Aorta (tissue), 5 donors: ENCODE measurements at regions of chr11 and their contacts with region 1.

Region 1: GRCh38 chr11:57456960-57457642 is 3.2 kb upstream of the RTN4RL2 start:
- DNase-seq: peak; percentile 92 to 96
- ATAC-seq: peak; percentile 93
- H3K4me3 ChIP-seq: no peak overlapping the region
- H3K27ac ChIP-seq: no peak overlapping the region
- H3K4me1 ChIP-seq: no peaks in the 10 kb centered on the region
- H3K27me3 ChIP-seq: no peaks in the 10 kb centered on the region

Region 2: GRCh38 chr11:57410287-57410686 is 46.8 kb before region 1 on chr11:
- intact Hi-C with region 1: no loop called
- DNase-seq: no peak
- ATAC-seq: no peak
- H3K4me3 ChIP-seq: no peak overlapping the region
- H3K27ac ChIP-seq: no peak overlapping the region
- H3K4me1 ChIP-seq: no peaks in the 10 kb centered on the region
- H3K27me3 ChIP-seq: no peaks in the 10 kb centered on the region

Region 3: GRCh38 chr11:57434640-57435546 is 22.2 kb before region 1 on chr11:
- intact Hi-C with region 1: loop called in 1 of 2 experiments (anchors 1 kb)
- DNase-seq: no peak
- ATAC-seq: peak; percentile 83
- H3K4me3 ChIP-seq: no peak overlapping the region
- H3K27ac ChIP-seq: no peak overlapping the region
- H3K4me1 ChIP-seq: no peaks in the 10 kb centered on the region
- H3K27me3 ChIP-seq: no peaks in the 10 kb centered on the region

Region 4: DNA sequence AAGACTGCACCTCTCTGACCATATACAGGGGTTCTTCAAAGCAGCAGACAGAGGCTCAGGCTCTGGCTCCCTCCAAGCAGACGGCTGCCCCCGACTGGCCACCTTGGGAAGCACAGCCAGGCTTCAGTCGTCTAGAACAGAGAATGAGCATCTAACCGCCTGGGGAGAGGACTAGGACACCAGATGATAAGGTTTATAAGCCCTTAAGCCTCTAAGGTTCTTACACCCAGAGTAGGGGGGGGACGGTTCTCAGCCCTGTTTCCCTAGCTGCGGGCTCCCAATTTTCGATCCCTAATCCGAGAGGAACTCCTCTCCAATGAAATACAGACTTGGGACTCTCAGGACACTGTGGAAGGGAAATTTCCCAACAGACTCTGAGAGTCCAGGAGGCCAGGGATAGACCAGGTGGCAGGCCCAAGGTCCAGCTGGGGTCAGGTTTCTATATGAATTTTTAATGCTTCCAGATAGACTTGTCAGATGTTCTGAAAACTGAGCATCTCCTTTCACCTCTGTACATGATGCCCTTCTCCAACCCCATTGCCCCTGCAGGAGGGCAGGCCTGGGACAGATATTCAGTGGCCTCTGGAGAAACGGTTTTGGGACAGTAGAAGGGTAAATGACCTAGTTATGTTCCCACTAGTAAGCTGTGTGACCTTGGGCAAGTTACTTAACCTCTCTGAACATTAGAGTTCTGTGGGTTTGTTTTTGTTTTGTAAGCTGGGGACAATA is 23.5 kb after region 1 on chr11:
- intact Hi-C with region 1: loop called in 1 of 2 experiments (anchors 2 kb)
- DNase-seq: peak; percentile 78 to 91
- ATAC-seq: peak; percentile 68
- H3K4me3 ChIP-seq: no peak overlapping the region
- H3K27ac ChIP-seq: no peak overlapping the region
- H3K4me1 ChIP-seq: no peaks in the 10 kb centered on the region
- H3K27me3 ChIP-seq: no peaks in the 10 kb centered on the region

Region 5: GRCh38 chr11:57597916-57598830 is 141.1 kb after region 1 on chr11:
- intact Hi-C with region 1: no loop called
- DNase-seq: peak; percentile 89 to 91
- ATAC-seq: peak; percentile 96
- H3K4me3 ChIP-seq: peak overlapping the region; percentile 55 to 83
- H3K27ac ChIP-seq: peak overlapping the region; percentile 49 to 99
- H3K4me1 ChIP-seq: peaks cover 0 to 4% of the 10 kb centered on the region in 2 donors
- H3K27me3 ChIP-seq: no peaks in the 10 kb centered on the region

Region 6: DNA sequence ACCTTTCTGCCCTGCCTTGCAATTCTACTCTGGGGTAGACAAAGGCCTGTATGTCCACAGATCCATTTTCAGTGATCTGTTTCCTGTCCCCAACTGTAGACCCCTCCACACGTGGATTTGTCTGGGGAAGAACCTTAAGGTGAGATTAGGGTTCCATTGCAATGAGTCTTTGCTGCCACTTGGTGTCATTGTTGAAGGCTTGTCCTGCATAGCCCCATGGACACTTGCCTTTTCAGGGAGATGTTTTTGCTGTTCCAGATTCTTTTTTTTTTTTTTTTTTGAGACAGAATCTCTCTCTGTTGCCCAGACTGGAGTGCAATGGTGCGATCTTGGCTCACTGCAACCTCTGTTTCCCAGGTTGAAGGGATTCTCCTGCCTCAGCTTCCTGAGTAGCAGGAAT is 162.2 kb after region 1 on chr11:
- intact Hi-C with region 1: no loop called
- DNase-seq: no peak
- ATAC-seq: no peak
- H3K4me3 ChIP-seq: no peak overlapping the region
- H3K27ac ChIP-seq: no peak overlapping the region
- H3K4me1 ChIP-seq: no peaks in the 10 kb centered on the region
- H3K27me3 ChIP-seq: no peaks in the 10 kb centered on the region

Region 7: DNA sequence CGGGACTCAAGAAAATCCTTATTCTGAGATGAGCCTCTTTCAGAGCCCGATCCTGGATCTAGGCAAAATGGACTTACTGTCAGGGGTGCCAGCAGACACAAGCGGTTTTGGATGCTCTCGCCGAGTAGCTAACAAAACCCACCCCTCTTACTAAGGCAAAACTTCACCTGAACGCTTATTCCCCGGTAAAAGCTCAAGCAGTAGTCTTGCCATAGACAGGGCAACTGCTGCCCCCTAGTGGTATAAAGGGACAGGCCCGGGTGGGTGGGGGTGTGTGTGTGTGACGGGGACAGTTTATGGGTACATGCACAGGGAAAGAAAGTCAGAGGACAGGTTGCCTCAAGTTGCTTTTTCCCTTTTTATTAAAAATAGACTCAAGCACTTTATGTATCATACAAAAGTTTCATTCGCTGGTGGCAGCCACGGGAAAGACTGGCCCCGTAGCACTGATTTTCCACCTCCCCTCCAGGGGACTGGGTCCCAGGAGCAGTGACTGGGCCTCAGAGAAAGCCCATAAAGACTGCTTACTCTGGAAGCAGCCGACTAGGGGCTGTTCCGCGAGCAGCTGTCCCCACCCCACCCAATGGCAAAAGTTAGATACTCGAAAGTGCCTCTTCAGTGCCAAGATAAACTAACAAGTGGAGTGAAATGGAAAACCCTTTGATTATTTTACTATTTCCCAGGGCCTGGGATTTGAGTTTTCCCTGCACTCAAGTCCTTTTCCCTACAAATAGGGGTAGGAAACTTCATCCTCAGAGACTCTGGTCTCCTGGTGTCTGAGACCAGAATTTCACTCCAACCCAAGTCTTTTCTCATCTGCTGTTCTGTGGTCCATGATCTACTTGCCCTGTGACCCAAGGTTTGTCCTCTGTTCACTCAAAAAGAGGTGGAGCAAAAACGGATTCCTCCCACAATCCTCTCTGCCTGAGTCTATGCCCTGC is 187.9 kb after region 1 on chr11:
- intact Hi-C with region 1: loop called (anchors 5 to 10 kb)
- DNase-seq: peak; percentile 84 to 90
- ATAC-seq: peak; percentile 82
- H3K4me3 ChIP-seq: no peak overlapping the region
- H3K27ac ChIP-seq: no peak overlapping the region
- H3K4me1 ChIP-seq: no peaks in the 10 kb centered on the region
- H3K27me3 ChIP-seq: no peaks in the 10 kb centered on the region

Region 8: GRCh38 chr11:58513747-58514367 is 1056.8 kb after region 1 on chr11:
- intact Hi-C with region 1: loop called in 1 of 2 experiments (anchors 10 kb)
- DNase-seq: no peak
- ATAC-seq: peak; percentile 63
- H3K4me3 ChIP-seq: no peak overlapping the region
- H3K27ac ChIP-seq: no peak overlapping the region
- H3K4me1 ChIP-seq: no peaks in the 10 kb centered on the region
- H3K27me3 ChIP-seq: no peaks in the 10 kb centered on the region